ENCODE measurements at regions of chr1 and their contacts with region 1.

Region 1: DNA sequence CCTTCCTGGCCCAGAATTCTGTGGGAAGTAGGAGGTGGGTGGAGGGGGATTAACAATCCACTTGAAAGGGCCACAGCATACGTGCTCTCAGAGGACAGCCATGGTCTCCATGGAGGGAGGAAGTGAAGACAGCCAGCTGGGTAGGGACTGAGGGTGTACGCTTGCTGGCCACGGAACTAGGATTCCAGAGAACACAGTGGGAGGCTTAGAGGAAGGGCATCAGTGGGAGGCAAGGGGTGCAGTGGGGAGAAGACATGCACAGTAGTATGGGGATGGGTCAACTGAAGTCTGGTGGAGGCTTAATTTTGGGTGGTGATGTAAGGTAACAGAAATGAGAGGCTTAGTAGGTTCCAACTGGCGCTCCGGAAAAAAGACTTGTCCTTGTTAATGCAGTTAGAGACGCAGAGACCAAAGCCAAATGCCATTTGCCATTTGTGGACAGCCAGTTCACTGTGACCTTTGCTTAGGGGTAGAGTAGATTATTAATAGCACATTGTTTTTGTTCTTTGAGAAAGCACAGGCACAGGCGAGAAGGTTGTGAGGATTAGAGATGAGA is 103.0 kb downstream of the ZSCAN20 start:
- DNase-seq: peak in 4 of 5 donors; percentile 65 to 80 (median 70)
- ATAC-seq: peak; percentile 91 to 93 (median 92)
- H3K4me3 ChIP-seq: peak overlapping the region in 1 of 12 donors; percentile 7
- H3K27ac ChIP-seq: peak overlapping the region; percentile 77 to 98 (median 90)
- H3K4me1 ChIP-seq: peaks cover 6 to 76% (median 41%) of the 10 kb centered on the region in 12 donors
- H3K27me3 ChIP-seq: no peaks in the 10 kb centered on the region
- CTCF ChIP-seq: no peak
- POLR2A ChIP-seq: no peak

Region 2: DNA sequence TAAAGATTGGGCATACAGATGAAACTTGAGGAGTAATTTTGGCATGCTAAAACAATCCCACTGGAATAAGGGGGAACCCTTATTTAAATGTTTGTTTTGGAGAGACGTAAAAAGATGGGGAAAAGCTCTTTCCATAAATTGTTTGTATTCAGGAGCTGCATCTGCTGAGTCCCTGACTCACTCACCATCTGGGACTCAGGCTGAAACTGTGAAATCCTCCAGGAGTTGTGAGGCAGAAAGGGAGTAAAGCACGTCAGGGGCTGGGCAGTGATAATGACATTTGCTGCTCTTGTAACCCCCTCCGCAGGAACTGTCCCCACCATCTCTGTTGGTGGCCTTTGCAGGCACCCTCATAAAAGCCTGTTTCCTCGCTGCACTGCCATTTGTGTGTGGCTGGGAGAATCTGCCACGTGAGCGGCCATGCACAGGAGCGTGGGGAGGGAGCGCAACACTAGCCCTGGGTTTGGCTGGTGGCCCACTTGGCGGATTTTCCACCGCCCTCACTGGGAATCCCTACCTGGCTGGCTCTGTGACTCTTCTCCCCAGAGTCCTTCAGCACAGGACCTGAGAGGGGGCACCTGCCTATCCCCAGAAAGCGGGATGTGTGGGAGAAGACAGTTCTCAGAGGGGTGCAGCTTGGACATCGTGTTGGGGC is 57.7 kb before region 1 on chr1:
- intact Hi-C with region 1: loop called in 1 of 10 experiments (anchors 10 kb)
- DNase-seq: no peak
- ATAC-seq: no peak
- H3K4me3 ChIP-seq: no peak overlapping the region
- H3K27ac ChIP-seq: no peak overlapping the region
- H3K4me1 ChIP-seq: peaks cover 0 to 15% (median 7%) of the 10 kb centered on the region in 12 donors
- H3K27me3 ChIP-seq: no peaks in the 10 kb centered on the region
- CTCF ChIP-seq: no peak
- POLR2A ChIP-seq: no peak

Region 3: DNA sequence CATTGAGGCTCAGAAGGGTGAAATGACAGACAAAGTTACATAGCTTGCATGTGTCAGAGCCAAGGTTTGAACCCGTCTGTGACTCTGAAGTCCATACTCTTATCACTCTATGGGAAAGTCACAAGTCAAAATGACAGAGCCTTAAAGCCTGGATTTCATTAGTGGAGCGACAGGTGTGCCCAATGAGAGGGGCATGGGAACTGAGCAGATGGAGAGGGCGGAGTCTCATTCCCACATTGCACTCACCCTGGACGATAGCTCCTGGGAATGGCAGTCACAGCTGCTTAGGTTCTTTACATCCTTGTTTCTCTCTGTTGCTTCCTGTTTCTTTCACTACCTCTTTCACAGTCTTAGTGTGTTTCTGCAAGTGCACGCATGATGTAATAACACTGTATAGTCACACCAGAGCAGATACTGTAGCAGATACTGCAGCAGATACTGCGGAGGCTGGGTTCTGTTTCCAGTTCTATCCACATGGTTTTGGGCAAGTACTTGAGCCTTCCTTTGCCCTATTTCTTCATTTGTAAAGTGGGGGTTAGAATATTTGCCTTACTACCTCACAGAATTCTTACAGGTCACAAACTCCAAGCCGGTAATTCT is 24.2 kb after region 1 on chr1:
- intact Hi-C with region 1: loop called in 1 of 10 experiments (anchors 2 kb)
- DNase-seq: no peak
- ATAC-seq: no peak
- H3K4me3 ChIP-seq: no peak overlapping the region
- H3K27ac ChIP-seq: no peak overlapping the region
- H3K4me1 ChIP-seq: peaks cover 0 to under 1% (median 0%) of the 10 kb centered on the region in 12 donors
- H3K27me3 ChIP-seq: no peaks in the 10 kb centered on the region
- CTCF ChIP-seq: no peak
- POLR2A ChIP-seq: no peak